Stomach (tissue), 19 donors: ENCODE measurements at regions of chr9 and their contacts with region 1.

Region 1: GRCh38 chr9:385818-386398 is 171.2 kb downstream of the DOCK8 start:
- DNase-seq: peak; percentile 57 to 88
- H3K4me3 ChIP-seq: no peak overlapping the region
- H3K27ac ChIP-seq: no peak overlapping the region
- H3K4me1 ChIP-seq: no peaks in the 10 kb centered on the region
- H3K27me3 ChIP-seq: no peaks in the 10 kb centered on the region
- CTCF ChIP-seq: peak in 5 of 7 experiments; percentile 83 to 92 (median 90)
- EP300 ChIP-seq: no peak
- POLR2A ChIP-seq: no peak

Region 2: DNA sequence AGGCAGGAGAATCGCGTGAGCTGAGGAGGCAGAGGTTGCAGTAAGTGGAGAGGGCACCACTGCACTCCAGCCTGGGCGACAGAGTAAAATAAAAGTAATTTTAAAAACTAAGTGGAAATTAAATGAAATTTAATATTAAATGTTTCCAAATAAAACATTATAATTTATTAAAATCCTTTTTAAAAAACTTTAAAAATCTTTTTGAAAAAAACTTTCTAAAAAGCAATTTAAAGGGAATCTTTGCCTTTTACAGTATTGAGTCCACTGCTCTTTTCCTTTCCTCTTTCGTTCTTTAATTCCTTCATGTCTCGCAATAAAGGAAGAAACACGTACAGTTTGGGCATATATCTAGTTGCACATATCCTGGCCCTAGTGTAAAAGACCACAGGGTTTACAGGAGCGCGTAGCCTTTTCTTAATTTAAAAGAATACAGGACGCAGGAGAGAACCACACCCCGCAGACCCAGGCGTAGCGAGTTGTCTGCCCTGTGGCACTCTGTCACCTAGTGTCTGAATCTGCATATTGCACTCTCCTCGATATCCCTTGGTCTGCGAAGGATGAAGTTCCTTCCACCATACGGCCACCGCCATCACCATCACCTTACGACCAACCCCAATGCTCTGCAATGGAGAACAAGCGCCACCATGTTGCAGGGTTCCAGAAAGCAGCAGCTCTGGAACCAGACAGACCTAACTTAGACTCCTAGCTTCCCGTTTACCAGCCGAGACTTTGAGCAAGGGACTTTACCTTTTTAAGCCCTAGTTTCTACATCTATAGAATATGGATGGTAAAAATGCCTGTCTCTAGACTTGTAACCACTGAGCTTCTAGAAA is 378.0 kb after region 1 on chr9:
- intact Hi-C with region 1: loop called (anchors 5 kb)
- DNase-seq: peak; percentile 71 to 88
- H3K4me3 ChIP-seq: peak overlapping the region in 1 of 4 donors; percentile 19
- H3K27ac ChIP-seq: no peak overlapping the region
- H3K4me1 ChIP-seq: peaks cover 0 to 23% (median 11%) of the 10 kb centered on the region in 4 donors
- H3K27me3 ChIP-seq: peaks cover 0 to 7% (median 0%) of the 10 kb centered on the region in 3 donors
- CTCF ChIP-seq: peak in 5 of 7 experiments; percentile 78 to 97 (median 92)
- EP300 ChIP-seq: no peak
- POLR2A ChIP-seq: no peak

Region 3: DNA sequence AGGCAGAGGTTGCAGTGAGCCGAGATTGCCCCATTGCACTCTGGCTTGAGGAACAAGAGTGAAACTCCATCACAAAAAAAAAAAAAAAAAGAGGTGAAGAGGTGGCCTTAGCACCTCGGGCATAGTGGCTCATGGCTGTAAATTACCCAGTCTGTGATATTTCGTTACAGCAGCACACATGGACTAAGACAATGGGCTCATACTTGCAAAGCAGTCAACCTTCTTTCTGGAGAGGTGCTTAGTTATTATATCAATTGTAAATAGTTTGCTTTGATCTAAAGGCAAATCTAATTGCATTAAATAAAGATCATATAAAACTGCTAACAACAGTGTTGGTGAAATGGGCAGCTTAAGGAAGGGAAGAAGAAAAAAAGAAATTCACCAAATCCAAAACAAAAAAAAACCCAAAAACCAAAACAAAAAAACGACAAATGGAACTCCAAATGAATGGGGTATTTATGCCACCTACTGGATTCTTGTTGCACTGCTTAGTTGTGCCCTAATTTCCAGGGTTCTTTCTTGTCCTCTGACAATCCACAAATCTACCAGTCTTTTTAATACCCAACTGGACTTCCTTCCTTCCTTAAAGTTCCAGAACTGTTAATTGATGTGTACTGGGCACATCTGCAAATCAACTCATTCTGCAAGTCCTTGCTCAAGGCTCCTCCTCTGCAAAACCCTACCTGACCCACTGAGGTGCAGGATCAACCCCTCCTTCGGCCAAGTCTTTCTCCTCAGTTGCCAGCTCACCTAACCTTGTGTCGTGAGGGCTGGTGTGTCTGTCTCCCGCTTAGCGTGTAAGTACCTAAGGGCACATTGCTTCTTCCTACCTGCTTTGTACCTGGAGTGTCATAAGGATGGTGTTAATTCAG is 420.6 kb after region 1 on chr9:
- intact Hi-C with region 1: loop called (anchors 10 kb)
- DNase-seq: peak in 1 of 2 donors; percentile 62
- H3K4me3 ChIP-seq: no peak overlapping the region
- H3K27ac ChIP-seq: no peak overlapping the region
- H3K4me1 ChIP-seq: no peaks in the 10 kb centered on the region
- H3K27me3 ChIP-seq: peaks cover 0 to 12% (median 0%) of the 10 kb centered on the region in 3 donors
- CTCF ChIP-seq: peak in 5 of 7 experiments; percentile 36 to 65 (median 61)
- EP300 ChIP-seq: no peak
- POLR2A ChIP-seq: no peak